Naive thymus-derived CD4-positive, alpha-beta T cell (primary cell): ENCODE measurements at regions of chr2 and their contacts with region 1.

Region 1: GRCh38 chr2:237923481-237924163 is 43.2 kb upstream of the UBE2F start:
- DNase-seq: peak; percentile 57 to 90 (median 79)
- ATAC-seq: peak; percentile 99
- H3K4me3 ChIP-seq: peak overlapping the region; percentile 55
- H3K4me3 Mint-ChIP-seq: peak overlapping the region; percentile 37 to 81 (median 68)
- H3K27ac ChIP-seq: peak overlapping the region; percentile 20
- H3K27ac Mint-ChIP-seq: peak overlapping the region in 8 of 9 donors; percentile 16 to 86 (median 56)
- H3K4me1 ChIP-seq: no peaks in the 10 kb centered on the region
- H3K4me1 Mint-ChIP-seq: peaks cover 11 to 42% (median 31%) of the 10 kb centered on the region in 7 donors
- H3K27me3 ChIP-seq: no peaks in the 10 kb centered on the region
- H3K27me3 Mint-ChIP-seq: peaks cover 0 to 2% (median 0%) of the 10 kb centered on the region in 5 donors

Region 2: DNA sequence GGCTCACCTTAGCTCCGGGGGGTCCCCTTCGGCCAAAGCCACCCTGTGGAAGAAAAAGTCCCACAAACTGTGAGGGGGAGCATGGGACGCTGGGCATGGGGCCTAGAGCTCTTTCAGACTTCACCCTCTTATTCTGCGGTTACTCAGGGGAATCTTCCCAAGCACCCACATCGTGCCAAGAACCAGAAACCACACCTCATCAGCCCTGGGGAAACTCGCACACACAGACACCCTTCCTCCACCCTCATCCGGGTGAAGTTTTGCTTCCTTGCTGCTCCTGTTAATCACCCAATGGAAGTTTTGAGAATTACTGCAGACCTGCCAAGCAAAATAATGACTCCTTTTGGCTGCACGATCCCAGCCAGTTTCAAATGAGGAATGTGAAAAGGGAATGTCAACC is 568.7 kb before region 1 on chr2:
- CTCF ChIA-PET with region 1: no interaction called
- POLR2A ChIA-PET with region 1: no interaction called
- intact Hi-C with region 1: no loop called
- DNase-seq: no peak
- ATAC-seq: no peak
- H3K4me3 ChIP-seq: no peak overlapping the region
- H3K4me3 Mint-ChIP-seq: no peak overlapping the region
- H3K27ac ChIP-seq: no peak overlapping the region
- H3K27ac Mint-ChIP-seq: no peak overlapping the region
- H3K4me1 ChIP-seq: no peaks in the 10 kb centered on the region
- H3K4me1 Mint-ChIP-seq: peaks cover 0 to 2% (median 0%) of the 10 kb centered on the region in 7 donors
- H3K27me3 ChIP-seq: no peaks in the 10 kb centered on the region
- H3K27me3 Mint-ChIP-seq: no peaks in the 10 kb centered on the region

Region 3: GRCh38 chr2:237898057-237898414 is 25.6 kb before region 1 on chr2:
- CTCF ChIA-PET with region 1: interaction called, 5 read pairs
- POLR2A ChIA-PET with region 1: no interaction called
- intact Hi-C with region 1: loop called in 1 of 2 experiments (anchors 2 kb)
- DNase-seq: no peak
- ATAC-seq: no peak
- H3K4me3 ChIP-seq: peak overlapping the region; percentile 33
- H3K4me3 Mint-ChIP-seq: peak overlapping the region in 9 of 10 donors; percentile 29 to 86 (median 71)
- H3K27ac ChIP-seq: peak overlapping the region; percentile 38
- H3K27ac Mint-ChIP-seq: peak overlapping the region; percentile 87 to 96 (median 94)
- H3K4me1 ChIP-seq: peaks cover 19 to 29% of the 10 kb centered on the region in 2 donors
- H3K4me1 Mint-ChIP-seq: peaks cover 30 to 59% (median 48%) of the 10 kb centered on the region in 7 donors
- H3K27me3 ChIP-seq: no peaks in the 10 kb centered on the region
- H3K27me3 Mint-ChIP-seq: no peaks in the 10 kb centered on the region

Region 4: GRCh38 chr2:238015705-238016104 is 92.1 kb after region 1 on chr2:
- CTCF ChIA-PET with region 1: no interaction called
- POLR2A ChIA-PET with region 1: no interaction called
- intact Hi-C with region 1: loop called in 1 of 2 experiments (anchors 1 kb)
- DNase-seq: no peak
- ATAC-seq: no peak
- H3K4me3 ChIP-seq: no peak overlapping the region
- H3K4me3 Mint-ChIP-seq: no peak overlapping the region
- H3K27ac ChIP-seq: no peak overlapping the region
- H3K27ac Mint-ChIP-seq: peak overlapping the region in 2 of 9 donors; percentile 29 to 41
- H3K4me1 ChIP-seq: no peaks in the 10 kb centered on the region
- H3K4me1 Mint-ChIP-seq: peaks cover 7 to 22% (median 15%) of the 10 kb centered on the region in 7 donors
- H3K27me3 ChIP-seq: no peaks in the 10 kb centered on the region
- H3K27me3 Mint-ChIP-seq: no peaks in the 10 kb centered on the region

Region 5: GRCh38 chr2:238203094-238203972 is 279.7 kb after region 1 on chr2 and contains the start of gene ILKAP:
- CTCF ChIA-PET with region 1: no interaction called
- POLR2A ChIA-PET with region 1: interaction called, 3 read pairs
- intact Hi-C with region 1: loop called in 1 of 2 experiments (anchors 1 kb)
- DNase-seq: peak; percentile 87 to 95 (median 92)
- ATAC-seq: peak; percentile 98
- H3K4me3 ChIP-seq: peak within 1 kb of the TSS; percentile 67
- H3K4me3 Mint-ChIP-seq: peak within 1 kb of the TSS; percentile 84 to 94 (median 88)
- H3K27ac ChIP-seq: peak within 1 kb of the TSS; percentile 91
- H3K27ac Mint-ChIP-seq: peak within 1 kb of the TSS; percentile 84 to 95 (median 92)
- H3K4me1 ChIP-seq: peaks cover 20 to 35% of the 10 kb centered on the region in 2 donors
- H3K4me1 Mint-ChIP-seq: peaks cover 28 to 55% (median 43%) of the 10 kb centered on the region in 7 donors
- H3K27me3 ChIP-seq: no peaks in the 10 kb centered on the region
- H3K27me3 Mint-ChIP-seq: peaks cover 0 to 4% (median 0%) of the 10 kb centered on the region in 5 donors
- total RNA-seq, gene ILKAP: 68.1 to 126 (median 90.9) TPM

Region 6: DNA sequence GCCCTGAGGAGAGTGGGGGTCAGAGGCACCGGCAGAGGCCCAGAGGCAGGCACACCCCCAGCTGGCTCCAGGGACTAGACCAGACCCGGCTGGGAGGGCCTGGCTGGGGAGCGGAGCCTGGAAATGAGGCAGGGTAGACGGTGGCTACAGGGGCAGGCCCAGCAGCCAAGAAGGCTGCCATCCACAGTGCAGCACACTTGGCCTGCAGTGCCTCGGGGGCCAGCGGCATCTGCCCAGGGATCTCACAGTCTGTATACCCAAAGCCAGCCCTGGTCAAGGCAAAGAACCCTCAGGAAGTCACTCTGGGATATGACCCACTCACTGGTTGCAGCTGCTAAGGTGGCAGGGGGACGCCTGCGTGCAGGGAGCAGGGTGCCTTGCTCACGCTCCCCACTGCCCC is 347.0 kb after region 1 on chr2:
- CTCF ChIA-PET with region 1: interaction called, 13 read pairs
- POLR2A ChIA-PET with region 1: no interaction called
- intact Hi-C with region 1: no loop called
- DNase-seq: no peak
- ATAC-seq: no peak
- H3K4me3 ChIP-seq: no peak overlapping the region
- H3K4me3 Mint-ChIP-seq: no peak overlapping the region
- H3K27ac ChIP-seq: no peak overlapping the region
- H3K27ac Mint-ChIP-seq: no peak overlapping the region
- H3K4me1 ChIP-seq: no peaks in the 10 kb centered on the region
- H3K4me1 Mint-ChIP-seq: peaks cover 0 to 4% (median 0%) of the 10 kb centered on the region in 7 donors
- H3K27me3 ChIP-seq: no peaks in the 10 kb centered on the region
- H3K27me3 Mint-ChIP-seq: no peaks in the 10 kb centered on the region